Right ventricle myocardium inferior (tissue), 1 donor: ENCODE measurements at regions of chr15 and their contacts with region 1.

Region 1: GRCh38 chr15:84716036-84716799 is at the start of gene SEC11A:
- DNase-seq: peak; percentile 98
- ATAC-seq: peak; percentile 99
- total RNA-seq, gene SEC11A: 84.7 TPM

Region 2: DNA sequence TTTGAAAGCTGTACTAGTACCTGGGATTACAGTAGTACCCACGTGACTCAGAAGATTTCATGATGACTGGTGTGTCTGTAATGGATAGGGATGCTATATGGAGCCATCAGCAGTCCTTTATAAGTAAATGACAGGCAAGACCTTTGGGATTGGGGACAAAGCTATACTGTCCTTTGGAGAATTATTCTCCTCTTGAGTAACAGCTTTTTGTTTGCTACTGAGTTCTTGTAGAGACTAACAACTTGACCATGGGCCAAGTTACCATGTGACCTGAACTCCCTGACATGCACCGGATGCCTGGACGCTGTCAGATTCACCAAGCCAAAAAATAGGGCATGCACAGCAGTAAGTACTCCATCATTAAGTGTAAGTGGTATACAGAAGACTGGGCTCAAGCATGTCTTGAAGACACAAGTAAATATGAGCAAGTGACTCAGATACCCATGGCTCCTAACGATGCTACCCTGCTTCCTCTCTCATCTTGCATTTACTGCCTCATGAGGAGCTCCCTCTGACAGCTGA is 13.2 kb before region 1 on chr15:
- intact Hi-C with region 1: loop called (anchors 1 kb)
- DNase-seq: no peak
- ATAC-seq: peak; percentile 85

Region 3: GRCh38 chr15:84748274-84749110 is 32.3 kb after region 1 on chr15 and contains the start of gene ZNF592:
- intact Hi-C with region 1: loop called (anchors 2 kb)
- DNase-seq: peak; percentile 92
- ATAC-seq: peak; percentile 85
- total RNA-seq, gene ZNF592: 19.2 TPM

Region 4: GRCh38 chr15:84783496-84784251 is 67.5 kb after region 1 on chr15:
- intact Hi-C with region 1: loop called (anchors 2 kb)
- DNase-seq: no peak
- ATAC-seq: no peak